ENCODE measurements at regions of chr5 and their contacts with region 1.

Region 1: DNA sequence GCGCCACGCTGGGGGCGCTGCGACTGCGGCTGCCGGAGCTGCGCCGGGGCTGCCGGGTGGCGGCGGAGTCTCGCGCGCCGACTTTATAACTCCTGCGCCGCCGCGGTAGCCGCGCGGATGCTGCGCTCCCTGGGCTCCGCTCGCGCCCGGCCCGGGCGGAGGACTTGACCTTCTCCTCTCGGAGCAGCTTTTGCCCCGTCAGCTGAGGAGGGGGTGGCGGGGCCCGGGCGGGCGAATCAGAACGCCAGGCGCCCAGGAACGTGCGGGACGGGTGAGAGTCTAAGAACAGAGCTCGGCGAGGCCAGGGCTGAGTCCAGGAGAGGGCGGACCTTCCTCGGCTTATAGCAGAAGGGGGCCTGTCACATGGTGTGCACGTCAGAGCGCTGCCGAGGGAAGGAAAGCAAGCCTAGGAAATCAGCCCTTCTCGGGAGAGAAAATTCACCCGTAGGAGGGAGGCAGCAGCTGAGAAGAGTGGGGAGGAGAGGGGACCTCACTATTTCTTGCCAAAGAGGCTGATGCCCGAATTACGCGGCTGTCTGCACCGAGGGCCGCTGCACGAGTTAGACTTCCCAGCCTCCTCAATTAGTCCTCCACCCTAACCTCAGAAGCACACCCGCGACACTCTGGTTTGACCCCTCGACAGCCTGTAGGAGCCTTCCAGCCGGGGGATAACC is at the start of gene FOXD1:
- DNase-seq: peak; percentile 76
- ATAC-seq: peak; percentile 83
- H3K4me3 Mint-ChIP-seq: peak within 1 kb of the TSS; percentile 75
- H3K27ac Mint-ChIP-seq: peak within 1 kb of the TSS; percentile 31
- H3K4me1 Mint-ChIP-seq: peaks cover 8% of the 10 kb centered on the region
- H3K27me3 Mint-ChIP-seq: peaks cover 71% of the 10 kb centered on the region
- total RNA-seq, gene FOXD1: 0.23 to 0.48 TPM

Region 2: GRCh38 chr5:73088026-73088425 is 360.6 kb before region 1 on chr5:
- CTCF ChIA-PET with region 1: interaction called, 3 read pairs
- POLR2A ChIA-PET with region 1: no interaction called
- intact Hi-C with region 1: loop called in 1 of 2 experiments (anchors 1 kb)
- DNase-seq: no peak
- ATAC-seq: no peak
- H3K4me3 Mint-ChIP-seq: no peak overlapping the region
- H3K27ac Mint-ChIP-seq: no peak overlapping the region
- H3K4me1 Mint-ChIP-seq: no peaks in the 10 kb centered on the region
- H3K27me3 Mint-ChIP-seq: peaks cover 11% of the 10 kb centered on the region

Region 3: DNA sequence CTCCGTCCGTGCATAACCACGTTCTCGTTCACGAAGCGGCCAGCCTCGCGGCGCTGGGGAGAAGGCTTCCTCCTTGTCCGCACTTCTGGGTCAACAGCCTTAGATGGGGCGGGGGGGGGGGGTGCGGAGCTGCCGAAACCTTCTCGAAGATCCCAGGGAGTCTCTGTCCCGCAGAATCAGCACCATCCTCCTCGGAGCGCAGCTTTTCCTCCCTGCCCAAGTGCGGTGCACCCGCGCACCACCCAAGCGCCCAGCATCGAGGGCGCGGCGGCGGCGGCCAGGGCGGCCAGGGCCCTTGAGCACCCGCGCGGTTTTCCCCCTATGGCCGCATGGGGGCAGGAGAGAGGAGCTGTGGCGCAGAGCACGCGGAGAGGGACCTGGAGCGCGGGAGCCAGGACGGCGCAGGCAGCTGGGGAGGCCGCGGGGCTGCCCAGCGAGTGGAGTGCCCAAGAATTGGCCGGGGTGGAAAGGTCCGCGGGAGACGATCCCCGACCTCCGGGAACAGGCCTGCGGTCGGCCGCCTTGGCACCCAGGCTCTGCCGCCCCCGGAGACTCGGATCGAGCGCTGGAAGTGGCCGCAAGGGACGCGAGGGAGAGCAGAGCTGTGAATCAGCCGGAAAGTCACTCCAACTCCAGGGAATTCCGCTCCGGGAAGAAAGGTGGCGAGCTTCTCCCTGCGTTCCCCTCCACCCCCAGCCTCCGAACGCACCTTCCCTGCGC is 232.5 kb before region 1 on chr5:
- CTCF ChIA-PET with region 1: interaction called, 8 read pairs
- POLR2A ChIA-PET with region 1: no interaction called
- intact Hi-C with region 1: loop called (anchors 1 to 5 kb)
- DNase-seq: peak; percentile 84
- ATAC-seq: peak; percentile 82
- H3K4me3 Mint-ChIP-seq: no peak overlapping the region
- H3K27ac Mint-ChIP-seq: no peak overlapping the region
- H3K4me1 Mint-ChIP-seq: peaks cover 14% of the 10 kb centered on the region
- H3K27me3 Mint-ChIP-seq: peaks cover 76% of the 10 kb centered on the region

Region 4: DNA sequence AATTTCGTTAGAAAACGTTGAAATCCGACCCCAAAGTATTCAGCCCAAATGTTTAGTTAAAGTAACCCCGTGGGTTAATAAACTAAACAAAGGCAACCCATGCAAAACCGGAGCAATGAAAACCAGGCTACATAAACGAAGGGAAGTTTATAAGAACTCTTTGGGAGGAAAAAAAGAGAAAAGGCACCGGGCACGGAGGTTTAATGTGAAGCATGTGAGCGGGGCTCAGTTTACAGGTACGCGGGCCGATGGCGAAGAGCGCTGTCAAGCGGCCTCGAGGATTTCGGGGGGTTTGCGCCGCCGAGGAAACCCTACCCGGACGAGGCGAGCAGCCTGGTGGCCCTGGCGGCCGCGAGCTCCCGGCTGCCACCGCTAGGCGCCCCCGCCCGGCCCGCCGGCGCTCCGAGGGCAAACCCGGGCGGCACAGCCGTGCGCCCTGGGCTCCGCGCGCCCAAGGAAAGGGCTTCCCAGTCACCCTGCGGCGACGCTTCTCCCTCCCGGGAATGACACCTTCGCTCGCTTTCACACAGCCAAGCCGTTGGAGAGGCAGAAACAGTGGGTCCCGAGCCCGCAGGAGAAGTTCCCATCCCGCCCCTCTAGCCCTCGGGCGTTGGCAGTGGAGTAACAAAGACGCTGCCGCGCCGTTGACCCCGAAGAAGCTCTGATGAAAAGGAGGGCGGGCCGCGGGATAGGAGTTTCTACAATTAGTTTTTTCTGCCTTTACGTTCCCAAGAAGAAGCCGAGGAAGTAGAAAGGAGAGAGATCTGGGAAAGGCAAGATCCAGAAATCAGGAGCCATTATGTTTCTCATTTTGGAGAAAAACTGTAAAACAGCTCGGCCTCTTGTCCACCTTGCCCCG is 149.6 kb before region 1 on chr5:
- CTCF ChIA-PET with region 1: interaction called, 7 read pairs
- POLR2A ChIA-PET with region 1: no interaction called
- intact Hi-C with region 1: loop called (anchors 1 to 2 kb)
- DNase-seq: peak; percentile 47
- ATAC-seq: no peak
- H3K4me3 Mint-ChIP-seq: no peak overlapping the region
- H3K27ac Mint-ChIP-seq: no peak overlapping the region
- H3K4me1 Mint-ChIP-seq: peaks cover 18% of the 10 kb centered on the region
- H3K27me3 Mint-ChIP-seq: peaks cover 83% of the 10 kb centered on the region

Region 5: GRCh38 chr5:73354406-73354805 is 94.2 kb before region 1 on chr5:
- CTCF ChIA-PET with region 1: no interaction called
- POLR2A ChIA-PET with region 1: no interaction called
- intact Hi-C with region 1: no loop called
- DNase-seq: no peak
- ATAC-seq: no peak
- H3K4me3 Mint-ChIP-seq: no peak overlapping the region
- H3K27ac Mint-ChIP-seq: no peak overlapping the region
- H3K4me1 Mint-ChIP-seq: peaks cover 2% of the 10 kb centered on the region
- H3K27me3 Mint-ChIP-seq: peaks cover 52% of the 10 kb centered on the region

Region 6: DNA sequence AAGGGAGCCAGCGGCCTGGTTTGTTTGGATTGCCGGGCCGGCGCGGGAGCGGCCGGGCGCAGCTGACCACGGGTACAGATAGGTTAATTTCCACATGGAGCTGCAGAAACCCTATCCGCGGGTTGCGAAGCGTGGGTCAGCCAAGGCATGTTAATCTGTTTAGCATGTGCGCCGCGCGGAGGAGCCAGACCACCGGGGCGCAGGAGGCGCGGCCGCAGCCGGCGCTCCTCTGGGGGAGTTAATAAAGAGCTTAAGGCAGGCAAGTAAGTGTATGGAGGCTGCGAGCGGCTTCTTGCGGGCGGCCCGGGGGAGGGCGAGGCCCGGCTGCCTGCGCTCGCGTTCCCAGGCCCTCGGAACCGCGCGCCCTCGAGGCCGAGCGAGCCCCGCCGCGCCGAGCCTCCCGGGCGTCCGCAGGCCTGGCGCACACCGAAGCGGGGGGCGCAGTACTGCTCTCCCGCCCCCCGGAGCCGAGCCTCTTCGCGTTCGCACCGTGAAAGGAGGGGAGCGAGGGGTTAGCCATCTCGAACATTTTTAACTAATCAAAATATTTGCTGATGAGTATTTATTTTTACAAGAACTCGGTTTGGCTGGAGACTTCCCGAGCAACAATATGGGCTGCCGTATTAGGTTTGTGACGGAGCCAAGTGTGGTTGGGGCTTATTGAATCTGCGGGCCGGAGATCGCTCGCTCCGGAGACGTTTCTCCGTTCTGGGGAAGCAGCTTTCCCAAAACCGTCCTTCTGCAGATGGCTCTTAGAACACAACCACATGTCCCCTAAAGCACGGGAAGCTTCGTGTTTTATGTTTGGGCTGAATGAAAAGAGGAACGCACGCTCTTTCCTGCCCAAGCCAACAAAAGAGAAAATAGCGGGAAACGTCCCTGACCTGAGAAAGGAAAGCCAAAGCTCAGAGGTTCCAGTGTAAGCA is 28.9 kb before region 1 on chr5:
- CTCF ChIA-PET with region 1: interaction called, 4 read pairs
- POLR2A ChIA-PET with region 1: no interaction called
- intact Hi-C with region 1: loop called in 1 of 2 experiments (anchors 2 kb)
- DNase-seq: no peak
- ATAC-seq: no peak
- H3K4me3 Mint-ChIP-seq: no peak overlapping the region
- H3K27ac Mint-ChIP-seq: no peak overlapping the region
- H3K4me1 Mint-ChIP-seq: peaks cover 13% of the 10 kb centered on the region
- H3K27me3 Mint-ChIP-seq: peaks cover 80% of the 10 kb centered on the region

Region 7: GRCh38 chr5:73498057-73499008 is 49.7 kb after region 1 on chr5 and contains the start of gene BTF3:
- CTCF ChIA-PET with region 1: interaction called, 4 read pairs
- POLR2A ChIA-PET with region 1: no interaction called
- intact Hi-C with region 1: loop called (anchors 2 to 5 kb)
- DNase-seq: peak; percentile 96
- ATAC-seq: peak; percentile 95
- H3K4me3 Mint-ChIP-seq: peak within 1 kb of the TSS; percentile 87
- H3K27ac Mint-ChIP-seq: peak within 1 kb of the TSS; percentile 98
- H3K4me1 Mint-ChIP-seq: peaks cover 35% of the 10 kb centered on the region
- H3K27me3 Mint-ChIP-seq: peaks cover 2% of the 10 kb centered on the region
- total RNA-seq, gene BTF3: 1,030 to 1,213 TPM

Region 8: GRCh38 chr5:73513960-73514359 is 65.4 kb after region 1 on chr5:
- CTCF ChIA-PET with region 1: no interaction called
- POLR2A ChIA-PET with region 1: no interaction called
- intact Hi-C with region 1: no loop called
- DNase-seq: no peak
- ATAC-seq: no peak
- H3K4me3 Mint-ChIP-seq: no peak overlapping the region
- H3K27ac Mint-ChIP-seq: no peak overlapping the region
- H3K4me1 Mint-ChIP-seq: no peaks in the 10 kb centered on the region
- H3K27me3 Mint-ChIP-seq: no peaks in the 10 kb centered on the region

Region 9: GRCh38 chr5:73528248-73528647 is 79.6 kb after region 1 on chr5:
- CTCF ChIA-PET with region 1: no interaction called
- POLR2A ChIA-PET with region 1: no interaction called
- intact Hi-C with region 1: no loop called
- DNase-seq: no peak
- ATAC-seq: no peak
- H3K4me3 Mint-ChIP-seq: no peak overlapping the region
- H3K27ac Mint-ChIP-seq: no peak overlapping the region
- H3K4me1 Mint-ChIP-seq: no peaks in the 10 kb centered on the region
- H3K27me3 Mint-ChIP-seq: peaks cover 11% of the 10 kb centered on the region